Thyroid gland (tissue), 4 donors: ENCODE measurements at regions of chr12 and their contacts with region 1.

Region 1: DNA sequence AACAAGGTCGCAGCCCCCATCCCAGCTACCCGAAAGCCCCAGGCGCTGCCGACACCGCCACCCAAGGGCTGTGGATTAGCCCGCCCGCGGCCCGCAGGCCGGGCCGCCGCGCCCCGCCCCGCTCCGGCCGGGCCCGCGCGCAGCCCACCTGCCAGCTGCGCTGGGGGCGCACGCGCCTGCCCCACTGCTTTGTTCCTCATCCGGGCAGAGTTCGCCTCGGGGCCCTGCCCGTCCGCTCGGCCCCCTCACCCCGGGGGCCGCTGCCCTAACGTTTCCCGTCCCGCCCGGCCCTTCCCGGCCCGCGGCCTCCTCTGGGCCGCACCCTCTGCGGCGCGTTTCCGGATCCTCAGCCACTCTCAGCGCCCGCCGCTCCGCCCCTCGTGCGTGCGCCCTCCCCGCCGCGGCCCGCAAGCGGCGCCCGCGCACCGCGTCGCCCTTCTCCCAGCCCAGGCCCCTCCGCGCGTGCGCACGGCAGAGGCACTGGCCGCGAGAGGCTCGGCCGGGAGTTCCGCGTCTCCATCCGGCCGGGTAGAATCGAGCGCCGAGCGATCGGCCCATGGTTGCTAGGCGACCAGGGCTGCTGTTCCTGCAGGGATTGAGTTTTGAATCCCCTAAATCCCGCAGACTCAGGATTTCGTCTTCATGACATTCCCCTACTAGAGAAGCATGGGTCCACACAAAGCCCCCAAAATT is at the start of gene PRDM4:
- DNase-seq: peak; percentile 94 to 95
- H3K4me3 ChIP-seq: peak within 1 kb of the TSS; percentile 67 to 81 (median 71)
- H3K27ac ChIP-seq: peak within 1 kb of the TSS in 2 of 3 donors; percentile 51 to 67
- H3K4me1 ChIP-seq: peaks cover 19% of the 10 kb centered on the region in 2 donors
- H3K27me3 ChIP-seq: no peaks in the 10 kb centered on the region
- CTCF ChIP-seq: peak in 4 of 6 experiments; percentile 28 to 87 (median 48)
- POLR2A ChIP-seq: peak; percentile 68 to 93
- total RNA-seq, gene PRDM4: 23.7 to 38.7 (median 25.1) TPM

Region 2: GRCh38 chr12:107685360-107686248 is 75.4 kb before region 1 on chr12 and contains the start of gene PWP1:
- intact Hi-C with region 1: loop called (anchors 5 kb)
- DNase-seq: peak; percentile 95
- H3K4me3 ChIP-seq: peak within 1 kb of the TSS; percentile 75 to 87 (median 80)
- H3K27ac ChIP-seq: peak within 1 kb of the TSS; percentile 44 to 67 (median 45)
- H3K4me1 ChIP-seq: peaks cover 9 to 11% of the 10 kb centered on the region in 2 donors
- H3K27me3 ChIP-seq: no peaks in the 10 kb centered on the region
- CTCF ChIP-seq: no peak
- POLR2A ChIP-seq: peak in 1 of 2 donors; percentile 78
- total RNA-seq, gene PWP1: 73.4 to 90.3 (median 89.3) TPM

Region 3: DNA sequence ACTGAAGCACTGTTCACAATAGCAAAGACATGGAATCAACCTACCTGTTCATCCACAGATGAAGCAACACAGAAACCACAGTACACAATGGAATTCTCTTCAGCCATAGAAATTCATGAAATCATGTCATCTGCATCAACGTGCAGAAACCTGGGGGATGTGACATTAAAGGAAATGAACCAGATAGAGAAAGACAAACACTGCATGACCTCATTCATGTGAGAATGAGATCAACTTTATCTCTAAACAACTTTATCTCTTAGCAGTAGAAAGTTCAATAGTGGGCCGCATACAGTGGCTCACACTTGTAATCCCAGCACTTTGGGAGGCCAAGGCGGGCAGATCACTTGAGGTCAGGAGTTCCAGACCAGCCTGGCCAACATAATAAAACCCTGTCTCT is 33.5 kb after region 1 on chr12:
- intact Hi-C with region 1: no loop called
- DNase-seq: no peak
- H3K4me3 ChIP-seq: no peak overlapping the region
- H3K27ac ChIP-seq: no peak overlapping the region
- H3K4me1 ChIP-seq: no peaks in the 10 kb centered on the region
- H3K27me3 ChIP-seq: no peaks in the 10 kb centered on the region
- CTCF ChIP-seq: no peak
- POLR2A ChIP-seq: no peak